ENCODE measurements at regions of chr3 and their contacts with region 1.

Region 1: DNA sequence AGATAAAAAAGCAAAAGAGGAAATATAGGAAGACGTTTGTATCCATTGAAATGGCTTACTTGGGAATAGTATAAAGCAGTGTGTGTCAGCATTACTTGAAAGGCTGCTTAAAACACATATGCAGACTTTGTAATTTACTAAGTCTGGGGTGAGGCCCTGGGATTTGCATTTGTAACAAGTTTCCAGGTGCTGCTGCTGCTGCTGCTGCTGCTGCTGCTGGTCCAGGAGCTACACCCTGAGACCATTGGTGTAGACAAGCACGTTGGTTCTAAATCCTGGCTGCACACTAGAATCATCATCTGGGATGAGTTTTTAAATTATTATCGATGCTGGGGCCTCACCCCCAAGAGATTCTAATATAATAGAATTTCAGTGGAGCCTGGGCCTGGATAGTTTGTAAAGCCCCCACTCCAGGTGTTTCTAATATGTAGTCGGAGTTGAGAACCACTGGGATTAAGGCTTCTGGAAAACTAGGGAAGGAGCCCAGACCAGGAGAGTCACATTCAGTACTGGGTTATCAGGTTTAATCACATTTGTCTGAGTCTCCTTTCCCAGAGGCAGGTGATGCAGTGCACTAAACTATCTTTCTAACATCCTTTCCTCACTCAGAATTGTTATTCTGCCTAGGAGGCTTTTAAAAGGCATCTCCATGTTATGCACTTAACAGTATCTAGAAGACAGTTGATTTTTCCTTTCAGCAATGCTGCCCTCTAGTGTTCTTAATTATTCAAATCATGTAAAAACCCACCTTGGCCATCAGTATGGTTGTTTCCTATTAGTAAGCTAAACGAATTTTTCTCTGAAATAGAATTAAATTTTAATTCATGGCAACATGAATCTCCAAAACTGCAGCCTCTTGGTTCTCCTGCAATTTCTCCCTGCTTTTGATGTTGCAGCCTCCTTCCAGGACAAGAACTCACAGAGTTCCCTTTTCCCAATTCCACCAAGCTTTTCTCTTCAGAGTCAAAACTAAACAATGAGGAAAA is 45.4 kb downstream of the SSR3 start:
- DNase-seq: peak; percentile 80
- H3K4me3 ChIP-seq: no peak overlapping the region
- H3K27ac ChIP-seq: no peak overlapping the region
- H3K4me1 ChIP-seq: peaks cover 3% of the 10 kb centered on the region
- H3K27me3 ChIP-seq: no peaks in the 10 kb centered on the region
- CTCF ChIP-seq: peak; percentile 32 to 35
- POLR2A ChIP-seq: no peak

Region 2: DNA sequence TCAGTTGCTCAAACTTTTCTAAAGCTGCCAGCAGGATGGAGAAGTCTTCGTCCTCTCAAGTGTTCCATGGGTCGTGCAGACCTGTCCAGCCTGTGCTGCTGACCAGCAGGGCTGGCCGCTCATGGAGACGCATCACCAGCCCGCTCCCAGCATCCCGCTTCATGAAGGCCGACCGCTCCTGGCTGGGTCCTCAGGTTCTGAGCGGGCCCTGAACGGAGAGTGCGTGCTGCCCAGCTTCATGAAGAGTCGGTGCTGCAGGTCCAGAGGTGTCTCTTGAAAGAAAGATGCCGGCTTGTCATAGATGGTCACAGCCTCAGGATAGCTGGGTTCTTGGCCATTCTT is 464.9 kb before region 1 on chr3:
- CTCF ChIA-PET with region 1: interaction called, 27 read pairs
- POLR2A ChIA-PET with region 1: no interaction called
- dilution Hi-C with region 1: no loop called
- intact Hi-C with region 1: loop called (anchors 5 kb)
- DNase-seq: no peak
- H3K4me3 ChIP-seq: no peak overlapping the region
- H3K27ac ChIP-seq: no peak overlapping the region
- H3K4me1 ChIP-seq: no peaks in the 10 kb centered on the region
- H3K27me3 ChIP-seq: no peaks in the 10 kb centered on the region
- CTCF ChIP-seq: no peak
- POLR2A ChIP-seq: no peak

Region 3: DNA sequence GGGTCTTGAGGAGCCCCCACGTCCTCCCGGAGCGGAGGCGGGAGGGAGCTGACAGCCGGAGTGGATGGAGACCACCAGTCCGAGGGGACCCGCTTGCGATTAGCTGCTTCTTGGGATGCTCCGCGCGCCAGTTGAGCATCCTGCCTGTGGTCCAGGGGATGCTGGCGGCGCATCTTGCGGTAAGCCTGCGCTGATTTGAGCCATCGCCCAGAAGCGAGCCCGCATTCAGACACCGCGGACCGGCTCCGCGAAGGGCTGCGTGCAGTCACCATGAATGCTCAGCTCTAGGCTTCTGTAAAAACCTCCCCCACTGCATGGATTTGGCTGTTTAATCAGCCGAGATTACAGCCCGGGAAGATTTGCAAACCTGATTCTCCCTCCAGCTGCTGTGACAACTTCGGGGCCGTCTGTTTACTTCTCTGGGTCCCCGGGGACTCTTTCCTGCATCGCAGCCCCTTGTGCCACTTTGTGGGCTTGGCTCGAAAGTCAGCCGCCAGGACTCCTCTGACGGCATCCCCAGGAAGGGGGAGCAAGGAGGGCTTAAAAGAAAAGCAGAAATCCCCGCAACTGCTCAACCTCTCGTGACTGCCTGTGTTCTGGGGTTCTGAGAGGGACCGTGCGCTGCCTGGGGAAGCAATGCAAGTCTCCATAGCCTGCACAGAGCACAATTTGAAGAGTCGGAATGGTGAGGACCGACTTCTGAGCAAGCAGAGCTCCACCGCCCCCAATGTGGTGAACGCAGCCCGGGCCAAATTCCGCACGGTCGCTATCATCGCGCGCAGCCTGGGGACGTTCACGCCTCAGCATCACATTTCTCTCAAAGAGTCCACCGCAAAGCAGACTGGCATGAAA is 218.0 kb before region 1 on chr3:
- CTCF ChIA-PET with region 1: no interaction called
- POLR2A ChIA-PET with region 1: no interaction called
- dilution Hi-C with region 1: no loop called
- intact Hi-C with region 1: no loop called
- DNase-seq: no peak
- H3K4me3 ChIP-seq: peak overlapping the region; percentile 12 to 21 (median 14)
- H3K27ac ChIP-seq: no peak overlapping the region
- H3K4me1 ChIP-seq: peaks cover 6% of the 10 kb centered on the region
- H3K27me3 ChIP-seq: peaks cover 8 to 16% of the 10 kb centered on the region in 2 experiments
- CTCF ChIP-seq: no peak
- POLR2A ChIP-seq: no peak

Region 4: DNA sequence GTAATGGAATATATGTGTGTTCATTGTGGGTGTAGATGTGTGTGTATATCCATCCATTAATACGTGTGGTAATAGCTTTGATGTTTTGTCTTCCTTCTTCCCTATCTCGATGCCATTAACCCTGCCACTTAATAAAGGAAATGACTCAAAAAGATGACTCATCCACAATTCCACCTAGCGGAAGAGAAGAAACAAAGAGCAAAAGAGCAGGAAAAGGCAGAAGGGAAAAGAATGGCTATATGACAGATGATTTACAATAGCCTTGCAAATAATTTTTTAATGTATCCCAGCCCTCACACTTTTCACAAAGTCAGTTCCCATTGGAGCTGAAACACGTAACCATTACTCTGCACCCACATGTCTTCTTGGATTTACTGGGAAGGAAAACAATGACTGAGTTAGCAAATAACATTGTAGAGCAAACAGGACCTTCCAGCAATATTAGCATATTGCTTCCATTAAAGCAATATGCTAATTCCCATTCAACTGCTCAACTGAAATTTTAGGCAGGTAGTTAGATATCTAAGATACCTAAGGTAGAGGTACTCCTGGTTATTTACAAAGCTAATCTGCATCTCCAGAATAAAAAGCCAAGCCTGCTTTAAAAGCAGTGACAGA is 191.9 kb before region 1 on chr3:
- CTCF ChIA-PET with region 1: interaction called, 4 read pairs
- POLR2A ChIA-PET with region 1: no interaction called
- dilution Hi-C with region 1: no loop called
- intact Hi-C with region 1: loop called (anchors 5 kb)
- DNase-seq: peak; percentile 96
- H3K4me3 ChIP-seq: no peak overlapping the region
- H3K27ac ChIP-seq: peak overlapping the region; percentile 72
- H3K4me1 ChIP-seq: peaks cover 24% of the 10 kb centered on the region
- H3K27me3 ChIP-seq: no peaks in the 10 kb centered on the region
- CTCF ChIP-seq: no peak
- POLR2A ChIP-seq: no peak

Region 5: DNA sequence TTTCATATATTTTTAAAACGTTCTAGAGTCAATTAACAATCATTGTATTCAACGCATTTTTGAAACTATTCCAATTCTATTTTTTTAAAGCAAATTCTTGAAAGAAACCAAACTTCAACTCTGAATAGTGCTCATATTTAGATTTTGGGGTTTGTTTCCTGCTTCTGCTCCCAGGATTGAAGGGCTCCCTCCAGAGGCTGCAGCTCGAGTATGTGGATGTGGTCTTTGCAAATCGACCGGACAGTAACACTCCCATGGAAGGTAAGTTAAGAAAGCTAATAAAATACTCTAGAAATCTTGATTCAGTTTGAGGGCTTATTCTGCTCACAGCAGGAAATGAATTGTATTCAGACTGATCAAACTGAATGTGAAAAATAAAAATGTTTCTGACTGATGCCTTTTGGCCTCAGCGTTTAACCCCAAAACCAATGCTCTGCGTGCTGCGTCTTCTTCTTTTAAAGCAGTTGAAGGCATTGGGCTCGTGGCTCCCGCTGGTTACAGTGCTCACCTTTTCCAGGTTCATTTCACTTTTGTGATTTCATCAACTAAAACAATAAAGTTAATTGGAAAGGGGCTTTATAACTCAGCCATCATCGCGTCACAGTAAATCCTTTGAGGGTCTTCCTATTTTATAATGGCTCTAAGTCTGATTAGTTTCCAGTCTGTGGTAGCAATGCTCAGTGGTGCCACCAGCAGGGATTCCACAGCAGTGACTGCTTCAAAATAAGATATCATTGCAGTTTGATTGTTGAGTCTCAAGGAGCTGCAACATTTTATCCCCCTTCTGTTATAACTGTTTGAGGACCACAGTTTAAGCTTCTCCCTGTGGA is 34.7 kb before region 1 on chr3:
- CTCF ChIA-PET with region 1: interaction called, 30 read pairs
- POLR2A ChIA-PET with region 1: no interaction called
- dilution Hi-C with region 1: no loop called
- intact Hi-C with region 1: loop called (anchors 1 kb)
- DNase-seq: no peak
- H3K4me3 ChIP-seq: no peak overlapping the region
- H3K27ac ChIP-seq: no peak overlapping the region
- H3K4me1 ChIP-seq: no peaks in the 10 kb centered on the region
- H3K27me3 ChIP-seq: no peaks in the 10 kb centered on the region
- CTCF ChIP-seq: peak; percentile 29 to 43
- POLR2A ChIP-seq: no peak

Region 6: GRCh38 chr3:156519758-156520162 is 10.3 kb after region 1 on chr3:
- CTCF ChIA-PET with region 1: interaction called, 24 read pairs
- POLR2A ChIA-PET with region 1: no interaction called
- dilution Hi-C with region 1: no loop called
- intact Hi-C with region 1: no loop called
- DNase-seq: no peak
- H3K4me3 ChIP-seq: no peak overlapping the region
- H3K27ac ChIP-seq: no peak overlapping the region
- H3K4me1 ChIP-seq: no peaks in the 10 kb centered on the region
- H3K27me3 ChIP-seq: peaks cover 3 to 10% of the 10 kb centered on the region in 2 experiments
- CTCF ChIP-seq: no peak
- POLR2A ChIP-seq: no peak

Region 7: DNA sequence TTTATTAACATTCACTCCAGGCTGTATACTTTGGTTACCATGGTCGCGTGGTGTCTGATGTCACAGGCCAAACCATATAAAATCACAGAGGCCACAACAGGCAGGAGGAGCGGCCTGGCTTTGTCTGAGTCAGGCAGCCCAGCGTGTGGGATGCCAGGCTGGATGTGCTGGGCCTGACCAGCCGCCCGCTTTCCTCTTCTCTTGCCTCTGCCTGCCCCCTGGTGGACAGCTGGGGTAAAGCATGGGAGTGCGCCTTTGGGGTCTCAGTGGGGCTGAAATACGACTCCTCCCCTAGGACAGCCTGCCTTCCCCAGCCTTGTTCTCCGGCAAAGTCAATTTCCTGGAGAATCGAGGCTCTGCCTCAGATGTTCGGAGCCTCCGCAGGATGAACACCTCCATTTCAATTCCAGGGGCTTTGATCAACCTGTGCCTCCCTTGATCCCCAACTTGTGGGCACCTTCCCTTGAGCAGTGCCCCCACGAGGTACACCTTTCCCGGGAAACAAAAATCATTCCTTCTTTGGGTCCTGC is 572.3 kb after region 1 on chr3:
- CTCF ChIA-PET with region 1: interaction called, 10 read pairs
- POLR2A ChIA-PET with region 1: no interaction called
- dilution Hi-C with region 1: no loop called
- intact Hi-C with region 1: no loop called
- DNase-seq: peak; percentile 85
- H3K4me3 ChIP-seq: no peak overlapping the region
- H3K27ac ChIP-seq: no peak overlapping the region
- H3K4me1 ChIP-seq: no peaks in the 10 kb centered on the region
- H3K27me3 ChIP-seq: no peaks in the 10 kb centered on the region
- CTCF ChIP-seq: peak; percentile 94 to 96
- POLR2A ChIP-seq: no peak